PC-3 (cell line): ENCODE measurements at regions of chrX and their contacts with region 1.

Region 1: GRCh38 chrX:5068550-5068949 is 1160.1 kb downstream of the NLGN4X start:
- DNase-seq: peak; percentile 77
- ATAC-seq: peak; percentile 85
- H3K4me3 ChIP-seq: no peak overlapping the region
- H3K27ac ChIP-seq: 0 out of 2 replicates have a peak overlapping the region, but pooled peaks have one; percentile 13
- H3K4me1 ChIP-seq: peaks cover 19% of the 10 kb centered on the region
- H3K27me3 ChIP-seq: no peaks in the 10 kb centered on the region
- CTCF ChIP-seq: no peak

Region 2: DNA sequence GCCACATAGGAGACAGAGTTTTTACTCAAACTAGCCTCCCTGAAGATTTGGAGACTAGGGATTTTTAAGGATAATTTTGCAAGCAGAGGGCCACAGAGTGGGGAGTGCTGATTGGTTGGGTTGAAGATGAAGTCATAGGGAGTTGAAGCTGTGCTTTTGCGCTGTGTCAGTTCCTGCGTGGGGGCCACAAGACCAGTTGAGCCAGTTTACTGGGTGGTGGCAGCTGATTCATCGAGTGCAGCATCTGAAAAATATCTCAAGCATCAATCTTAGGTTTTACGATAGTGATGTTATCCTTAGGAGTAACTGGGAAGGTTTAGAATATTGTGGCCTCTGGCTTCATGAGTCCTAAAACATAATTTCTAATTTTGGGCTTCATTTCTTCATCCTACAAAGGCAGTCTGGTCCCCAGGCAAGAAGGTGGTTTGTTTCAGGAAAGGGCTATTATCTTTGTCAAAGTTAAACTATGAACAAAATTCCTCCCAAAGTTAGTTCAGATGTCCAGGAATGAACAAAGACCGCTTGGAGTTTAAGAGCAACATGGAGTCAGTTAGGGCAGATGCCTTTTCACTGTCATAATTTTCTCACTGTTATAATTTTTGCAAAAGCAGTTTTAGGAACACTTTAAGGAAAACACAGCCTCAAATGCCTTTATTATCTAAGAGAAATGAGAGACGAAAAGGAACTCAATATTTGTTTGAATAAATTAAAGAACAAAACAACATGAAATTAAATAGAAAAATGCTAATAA is 394.3 kb before region 1 on chrX:
- CTCF ChIA-PET with region 1: no interaction called
- POLR2A ChIA-PET with region 1: no interaction called
- intact Hi-C with region 1: no loop called
- DNase-seq: peak; percentile 84
- ATAC-seq: peak; percentile 44
- H3K4me3 ChIP-seq: no peak overlapping the region
- H3K27ac ChIP-seq: peak overlapping the region; percentile 66
- H3K4me1 ChIP-seq: peaks cover 50% of the 10 kb centered on the region
- H3K27me3 ChIP-seq: no peaks in the 10 kb centered on the region
- CTCF ChIP-seq: no peak

Region 3: GRCh38 chrX:5051831-5052491 is 16.6 kb before region 1 on chrX:
- CTCF ChIA-PET with region 1: no interaction called
- POLR2A ChIA-PET with region 1: interaction called, 5 read pairs
- intact Hi-C with region 1: loop called (anchors 1 kb)
- DNase-seq: peak; percentile 95
- ATAC-seq: peak; percentile 95
- H3K4me3 ChIP-seq: peak overlapping the region; percentile 19; the same call in 1 of the 2 replicates
- H3K27ac ChIP-seq: peak overlapping the region; percentile 70
- H3K4me1 ChIP-seq: peaks cover 10% of the 10 kb centered on the region
- H3K27me3 ChIP-seq: no peaks in the 10 kb centered on the region
- CTCF ChIP-seq: no peak

Region 4: GRCh38 chrX:6266051-6266450 is 1197.5 kb after region 1 on chrX:
- CTCF ChIA-PET with region 1: no interaction called
- POLR2A ChIA-PET with region 1: no interaction called
- intact Hi-C with region 1: no loop called
- DNase-seq: no peak
- ATAC-seq: no peak
- H3K4me3 ChIP-seq: no peak overlapping the region
- H3K27ac ChIP-seq: no peak overlapping the region
- H3K4me1 ChIP-seq: no peaks in the 10 kb centered on the region
- H3K27me3 ChIP-seq: no peaks in the 10 kb centered on the region
- CTCF ChIP-seq: no peak